ENCODE measurements at regions of chr7 and their contacts with region 1.

Region 1: GRCh38 chr7:100177045-100178001 is at the starts of genes GPC2 and STAG3:
- DNase-seq: peak; percentile 99
- ATAC-seq: peak; percentile 91
- H3K4me3 Mint-ChIP-seq: peak within 1 kb of the TSS; percentile 77
- H3K27ac Mint-ChIP-seq: peak within 1 kb of the TSS; percentile 75
- H3K4me1 Mint-ChIP-seq: peaks cover 48% of the 10 kb centered on the region
- H3K27me3 Mint-ChIP-seq: peaks cover 18% of the 10 kb centered on the region
- total RNA-seq, gene GPC2: 8.1 to 8.2 TPM
- total RNA-seq, gene STAG3: 16.5 to 20.6 TPM

Region 2: DNA sequence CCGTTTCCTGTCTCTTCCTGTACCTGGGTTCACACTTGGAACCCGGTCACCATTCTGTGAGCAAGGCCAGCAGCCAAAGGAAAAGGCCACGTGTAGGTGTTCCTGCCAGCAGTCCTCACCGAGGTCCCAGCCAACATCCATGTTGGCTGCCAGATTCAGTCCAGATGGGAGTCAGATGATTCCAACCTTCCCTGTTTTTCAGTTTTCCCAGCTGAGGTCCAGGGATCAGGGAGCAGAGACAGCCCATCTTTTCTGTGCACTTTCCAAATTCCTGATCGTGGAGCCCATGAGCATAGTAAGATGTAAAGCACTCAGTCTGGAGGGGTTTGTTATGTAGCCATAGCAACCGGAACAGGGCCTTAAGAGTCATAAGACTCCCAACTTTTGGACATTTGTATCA is 38.6 kb after region 1 on chr7:
- CTCF ChIA-PET with region 1: interaction called, 16 read pairs
- POLR2A ChIA-PET with region 1: interaction called, 3 read pairs
- DNase-seq: no peak
- ATAC-seq: no peak
- H3K4me3 Mint-ChIP-seq: no peak overlapping the region
- H3K27ac Mint-ChIP-seq: no peak overlapping the region
- H3K4me1 Mint-ChIP-seq: peaks cover 63% of the 10 kb centered on the region
- H3K27me3 Mint-ChIP-seq: no peaks in the 10 kb centered on the region